ENCODE measurements at regions of chr14 and their contacts with region 1.

Region 1: DNA sequence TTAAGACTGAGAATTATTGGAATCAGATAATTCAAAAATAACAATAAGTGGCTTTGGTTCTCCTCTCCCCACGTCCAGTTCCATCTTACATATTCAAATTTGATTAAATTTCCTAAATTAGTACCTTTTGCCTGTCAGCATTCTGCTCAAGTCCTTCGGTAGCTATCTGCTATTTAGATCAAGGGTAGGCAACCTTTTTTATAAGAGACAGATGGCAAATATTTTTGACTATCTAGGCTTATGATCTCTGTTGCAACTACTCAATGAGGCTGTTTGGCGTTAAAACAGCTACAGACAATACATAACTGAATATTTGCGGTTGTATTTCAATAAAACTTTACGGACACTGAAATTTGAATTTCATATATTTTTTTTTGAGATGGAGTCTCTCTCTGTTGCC is 21.7 kb downstream of the L2HGDH start:
- DNase-seq: no peak
- ATAC-seq: no peak
- H3K4me3 ChIP-seq: no peak overlapping the region
- H3K27ac ChIP-seq: no peak overlapping the region
- H3K4me1 ChIP-seq: no peaks in the 10 kb centered on the region
- H3K27me3 ChIP-seq: no peaks in the 10 kb centered on the region
- CTCF ChIP-seq: no peak

Region 2: GRCh38 chr14:50109342-50109741 is 181.0 kb before region 1 on chr14:
- CTCF ChIA-PET with region 1: no interaction called
- POLR2A ChIA-PET with region 1: no interaction called
- intact Hi-C with region 1: no loop called
- DNase-seq: peak; percentile 38
- ATAC-seq: peak; percentile 16; the same call in 1 of the 2 replicates
- H3K4me3 ChIP-seq: no peak overlapping the region
- H3K27ac ChIP-seq: no peak overlapping the region
- H3K4me1 ChIP-seq: peaks cover 10% of the 10 kb centered on the region
- H3K27me3 ChIP-seq: no peaks in the 10 kb centered on the region
- CTCF ChIP-seq: peak; percentile 62

Region 3: GRCh38 chr14:50342221-50343078 is 52.1 kb after region 1 on chr14:
- CTCF ChIA-PET with region 1: no interaction called
- POLR2A ChIA-PET with region 1: interaction called, 32 read pairs
- intact Hi-C with region 1: no loop called
- DNase-seq: peak; percentile 86
- ATAC-seq: peak; percentile 95
- H3K4me3 ChIP-seq: peak overlapping the region; percentile 13; the same call in 1 of the 2 replicates
- H3K27ac ChIP-seq: no peak overlapping the region
- H3K4me1 ChIP-seq: peaks cover 22% of the 10 kb centered on the region
- H3K27me3 ChIP-seq: no peaks in the 10 kb centered on the region
- CTCF ChIP-seq: peak; percentile 72

Measured in PC-3 (cell line).